ENCODE measurements at regions of chr19 and their contacts with region 1.

Region 1: DNA sequence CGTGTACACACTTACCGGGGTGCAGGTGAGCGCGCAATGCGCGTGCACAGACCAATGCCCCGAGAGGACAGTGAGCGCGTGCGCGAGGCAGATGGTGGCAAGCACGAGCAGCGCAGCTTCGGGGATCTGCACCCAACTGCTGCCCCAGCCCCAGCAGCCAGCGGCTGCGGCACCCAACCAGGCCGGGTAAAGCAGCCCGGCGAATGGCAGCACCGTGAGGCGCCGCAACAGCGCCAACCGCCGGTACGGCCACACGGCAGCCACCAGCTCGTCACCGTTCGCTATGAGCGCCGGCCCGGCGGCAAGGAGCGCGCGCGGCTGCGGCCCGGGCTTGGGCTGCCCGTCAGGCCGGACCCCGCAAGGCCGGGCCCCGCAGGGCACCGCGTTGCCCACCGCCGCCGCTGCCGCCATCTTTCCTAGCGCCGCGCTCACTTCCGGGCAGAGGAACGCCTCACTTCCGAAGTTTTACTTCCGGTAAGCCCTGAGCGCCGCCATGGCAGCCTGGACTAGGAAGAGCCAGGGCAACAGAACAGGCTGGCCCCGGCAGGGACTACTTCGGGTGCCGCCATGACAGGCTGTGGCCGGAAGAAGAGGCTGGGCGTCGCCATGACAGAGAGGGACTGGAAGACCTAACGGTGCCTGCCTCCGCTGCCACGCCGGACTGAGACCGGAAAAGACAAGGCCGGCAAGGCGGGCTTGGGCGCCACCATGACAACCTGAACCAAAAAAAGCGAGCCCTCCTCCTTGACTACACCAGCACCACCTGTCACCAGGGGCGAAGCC is at the start of gene ATP13A1:
- DNase-seq: peak; percentile 98
- total RNA-seq, gene ATP13A1: 20.1 TPM

Region 2: DNA sequence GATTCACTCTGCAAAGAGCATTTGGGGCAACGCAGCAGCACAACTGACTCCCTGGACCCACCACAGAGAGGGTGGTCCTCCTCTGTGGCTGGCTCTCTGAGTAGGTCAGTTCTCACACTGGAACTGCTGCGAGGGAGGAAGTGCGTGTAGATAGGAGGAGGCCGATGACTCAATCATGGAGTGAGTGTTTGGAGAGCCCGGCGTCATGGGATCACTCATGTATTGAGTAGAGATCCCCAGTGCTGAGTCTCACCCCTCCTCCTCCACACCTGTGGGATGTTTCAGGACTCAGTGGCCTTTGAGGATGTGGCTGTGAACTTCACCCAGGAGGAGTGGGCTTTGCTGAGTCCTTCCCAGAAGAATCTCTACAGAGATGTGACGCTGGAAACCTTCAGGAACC is 14.1 kb after region 1 on chr19:
- intact Hi-C with region 1: no loop called
- DNase-seq: no peak

Region 3: GRCh38 chr19:19732579-19733501 is 69.4 kb after region 1 on chr19 and contains the start of gene ZNF14:
- intact Hi-C with region 1: loop called (anchors 5 kb)
- DNase-seq: peak; percentile 95
- total RNA-seq, gene ZNF14: 4.6 TPM

Region 4: GRCh38 chr19:19821366-19821951 is 158.0 kb after region 1 on chr19 and contains the start of gene ZNF506:
- intact Hi-C with region 1: loop called (anchors 5 kb)
- DNase-seq: peak; percentile 98
- total RNA-seq, gene ZNF506: 18.2 TPM

Region 5: DNA sequence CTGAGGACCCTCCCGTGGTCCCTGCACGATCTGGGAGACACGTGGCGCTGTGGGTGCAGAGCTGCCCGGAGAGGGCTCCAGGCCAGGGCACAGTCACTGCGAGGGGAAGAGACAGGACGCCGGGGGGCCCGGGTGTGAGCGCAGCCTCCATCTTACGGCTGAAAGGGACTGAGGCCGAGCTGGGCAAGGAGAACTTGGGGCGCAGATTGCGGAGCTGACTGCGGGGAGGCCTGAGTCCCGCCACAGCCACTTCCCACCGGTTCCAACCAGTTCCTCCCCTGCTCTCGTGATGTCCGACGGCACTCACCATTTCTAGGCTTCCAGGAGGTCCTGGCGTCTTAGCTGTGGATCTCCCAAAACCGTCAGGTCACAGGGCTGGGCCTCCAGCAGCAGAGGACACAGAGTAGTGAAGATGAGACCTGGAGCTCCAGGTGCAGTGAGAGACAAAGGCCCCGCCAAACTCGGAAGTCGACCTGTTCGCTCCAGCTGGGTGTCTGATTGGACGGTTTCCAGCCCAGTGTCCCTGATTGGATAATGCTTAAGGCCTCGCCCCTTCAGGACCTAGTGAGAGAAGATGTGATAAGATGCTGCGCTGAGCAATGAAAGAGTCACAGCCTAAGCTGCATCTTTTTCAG is 197.4 kb after region 1 on chr19:
- intact Hi-C with region 1: no loop called
- DNase-seq: no peak

Region 6: DNA sequence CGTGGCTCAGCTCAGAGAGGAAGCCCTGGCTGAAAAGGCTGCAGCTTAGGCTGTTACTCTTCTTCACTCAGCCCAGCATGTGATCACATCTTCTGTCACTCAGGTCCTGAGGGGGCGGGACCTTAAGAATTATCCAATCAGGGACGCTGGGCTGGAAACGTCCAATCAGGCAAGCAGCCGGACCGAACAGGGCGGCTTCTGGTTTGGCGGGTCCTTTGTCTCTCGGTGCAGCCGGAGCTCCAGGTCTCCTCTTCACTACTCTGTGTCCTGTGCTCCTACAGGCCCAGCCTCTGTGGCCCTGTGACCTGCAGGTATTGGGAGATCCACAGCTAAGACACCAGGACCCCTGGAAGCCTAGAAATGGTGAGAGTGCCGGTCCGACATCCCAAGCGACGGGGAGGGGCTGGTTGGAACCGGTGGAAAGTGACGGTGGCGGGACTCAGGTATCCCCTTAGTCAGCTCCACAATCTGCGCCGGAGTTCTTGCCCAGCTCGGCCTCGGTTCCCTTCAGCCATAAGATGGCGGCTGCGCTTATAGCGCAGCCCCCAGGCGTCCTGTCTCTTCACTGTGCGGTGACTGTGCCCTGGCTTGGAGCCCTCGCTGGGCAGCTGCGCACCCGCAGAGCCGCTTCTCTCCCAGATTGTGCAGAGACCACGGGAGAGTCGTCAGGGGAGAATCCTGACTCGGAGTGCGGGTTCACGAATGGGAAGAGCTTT is 237.4 kb after region 1 on chr19 and contains the start of gene ZNF93:
- intact Hi-C with region 1: loop called (anchors 10 kb)
- DNase-seq: peak; percentile 95
- total RNA-seq, gene ZNF93: 0.83 TPM

Measured in cardiac septum (tissue), 1 donor.